ENCODE measurements at regions of chr10 and their contacts with region 1.

Region 1: DNA sequence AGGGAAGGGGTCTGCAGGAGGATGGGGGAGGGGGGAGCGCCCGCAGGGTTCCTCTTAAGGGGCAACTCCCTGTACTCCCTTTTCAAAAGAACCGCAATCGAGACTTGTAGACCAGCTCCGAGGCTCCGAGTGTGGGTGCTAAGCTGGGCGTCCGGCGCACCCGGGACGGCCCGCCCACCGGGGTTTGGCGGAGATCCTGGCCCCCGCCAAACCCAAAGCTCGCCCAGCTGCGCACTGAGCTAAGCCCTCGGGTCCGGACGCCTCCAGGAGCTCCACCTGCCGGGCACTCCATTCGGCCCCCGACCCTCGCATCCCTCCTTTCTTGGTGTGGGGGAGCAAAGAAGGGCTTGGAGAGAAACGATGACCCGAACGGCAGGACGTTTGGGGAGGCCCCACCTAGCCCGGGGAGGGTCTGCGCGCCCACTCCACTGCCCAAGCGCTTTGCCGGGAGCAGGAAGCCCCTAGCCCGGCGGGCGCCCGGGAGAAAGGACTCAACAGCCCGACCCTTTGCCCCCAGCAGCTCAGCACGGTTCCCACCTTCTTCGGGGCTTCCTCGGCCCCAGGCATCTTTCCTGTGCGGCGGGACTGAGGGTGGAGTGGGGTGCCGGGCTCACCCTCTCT is 651 bp downstream of the AFAP1L2 start:
- DNase-seq: no peak
- H3K4me3 ChIP-seq: peak overlapping the region; percentile 54 to 64
- H3K27ac ChIP-seq: peak overlapping the region; percentile 75
- H3K4me1 ChIP-seq: no peaks in the 10 kb centered on the region
- H3K27me3 ChIP-seq: no peaks in the 10 kb centered on the region
- CTCF ChIP-seq: peak in 2 of 4 experiments; percentile 34 to 45
- POLR2A ChIP-seq: peak; percentile 18

Region 2: GRCh38 chr10:114173921-114174694 is 229.5 kb before region 1 on chr10 and contains the start of gene CCDC186:
- intact Hi-C with region 1: loop called (anchors 10 kb)
- DNase-seq: peak; percentile 99
- H3K4me3 ChIP-seq: peak within 1 kb of the TSS; percentile 87 to 99
- H3K27ac ChIP-seq: peak within 1 kb of the TSS; percentile 96 to 99
- H3K4me1 ChIP-seq: peaks cover 5% of the 10 kb centered on the region
- H3K27me3 ChIP-seq: no peaks in the 10 kb centered on the region
- CTCF ChIP-seq: peak in 1 of 4 experiments; percentile 21
- POLR2A ChIP-seq: peak; percentile 88
- total RNA-seq, gene CCDC186: 22.6 to 40.4 TPM

Region 3: GRCh38 chr10:114320249-114321116 is 83.2 kb before region 1 on chr10:
- intact Hi-C with region 1: no loop called
- DNase-seq: peak; percentile 39
- H3K4me3 ChIP-seq: no peak overlapping the region
- H3K27ac ChIP-seq: no peak overlapping the region
- H3K4me1 ChIP-seq: no peaks in the 10 kb centered on the region
- H3K27me3 ChIP-seq: no peaks in the 10 kb centered on the region
- CTCF ChIP-seq: no peak
- POLR2A ChIP-seq: peak; percentile 45

Region 4: GRCh38 chr10:114356751-114357514 is 46.7 kb before region 1 on chr10:
- intact Hi-C with region 1: loop called (anchors 5 kb)
- DNase-seq: no peak
- H3K4me3 ChIP-seq: no peak overlapping the region
- H3K27ac ChIP-seq: peak overlapping the region; percentile 17 to 38
- H3K4me1 ChIP-seq: no peaks in the 10 kb centered on the region
- H3K27me3 ChIP-seq: no peaks in the 10 kb centered on the region
- CTCF ChIP-seq: no peak
- POLR2A ChIP-seq: no peak

Region 5: GRCh38 chr10:114615600-114616007 is 212.0 kb after region 1 on chr10:
- intact Hi-C with region 1: no loop called
- DNase-seq: no peak
- H3K4me3 ChIP-seq: no peak overlapping the region
- H3K27ac ChIP-seq: no peak overlapping the region
- H3K4me1 ChIP-seq: no peaks in the 10 kb centered on the region
- H3K27me3 ChIP-seq: no peaks in the 10 kb centered on the region
- CTCF ChIP-seq: no peak
- POLR2A ChIP-seq: no peak